Activated CD4-positive, alpha-beta T cell treated with anti-CD3 and anti-CD28 coated beads, Interleukin-2, amount 10 ng/mL, durations not matched to agents 24 days and 14 days (primary cell): ENCODE measurements at regions of chr11 and their contacts with region 1.

Region 1: GRCh38 chr11:73141848-73142286 is 251 bp downstream of the FCHSD2 start:
- DNase-seq: peak; percentile 89
- H3K4me3 Mint-ChIP-seq: peak overlapping the region; percentile 99
- H3K27ac Mint-ChIP-seq: peak overlapping the region; percentile 98
- H3K4me1 Mint-ChIP-seq: peaks cover 42% of the 10 kb centered on the region
- H3K27me3 Mint-ChIP-seq: no peaks in the 10 kb centered on the region

Region 2: GRCh38 chr11:72814286-72815109 is 327.4 kb before region 1 on chr11 and contains the start of gene ATG16L2:
- intact Hi-C with region 1: loop called (anchors 1 kb)
- DNase-seq: peak; percentile 98
- H3K4me3 Mint-ChIP-seq: peak within 1 kb of the TSS; percentile 92
- H3K27ac Mint-ChIP-seq: peak within 1 kb of the TSS; percentile 100
- H3K4me1 Mint-ChIP-seq: peaks cover 44% of the 10 kb centered on the region
- H3K27me3 Mint-ChIP-seq: no peaks in the 10 kb centered on the region
- total RNA-seq, gene ATG16L2: 74.1 and 75.8 TPM in 2 replicates

Region 3: DNA sequence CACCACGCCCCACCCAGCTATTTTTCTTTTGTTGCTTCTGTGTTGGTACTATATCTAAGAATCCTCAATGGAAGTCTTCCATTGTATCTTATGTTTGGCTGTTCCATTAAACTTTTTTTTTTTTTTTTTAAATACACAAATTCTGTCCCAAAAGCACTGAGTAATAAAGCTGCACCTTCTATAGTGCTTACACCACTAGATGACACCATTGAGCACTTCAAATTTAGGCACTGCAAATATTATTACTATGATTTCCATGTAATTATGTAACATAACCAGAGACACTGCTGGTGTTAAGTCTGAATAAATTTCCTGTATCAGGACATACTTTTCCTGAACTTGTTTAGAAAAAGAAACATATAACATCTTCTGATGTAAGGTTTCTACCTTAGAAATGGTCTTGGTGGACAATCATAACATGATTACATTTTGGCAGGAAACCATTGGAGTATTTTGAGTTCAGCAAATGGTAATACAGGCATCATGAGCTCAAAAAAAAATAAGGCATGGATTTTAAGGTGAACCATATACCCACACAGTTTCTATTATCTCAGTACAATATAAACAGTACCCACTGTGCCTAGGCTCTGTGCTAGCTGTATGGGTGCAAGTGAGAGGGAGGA is 217.2 kb before region 1 on chr11:
- intact Hi-C with region 1: loop called (anchors 5 kb)
- DNase-seq: no peak
- H3K4me3 Mint-ChIP-seq: no peak overlapping the region
- H3K27ac Mint-ChIP-seq: no peak overlapping the region
- H3K4me1 Mint-ChIP-seq: peaks cover 3% of the 10 kb centered on the region
- H3K27me3 Mint-ChIP-seq: no peaks in the 10 kb centered on the region

Region 4: GRCh38 chr11:72969894-72970335 is 172.0 kb before region 1 on chr11:
- intact Hi-C with region 1: loop called (anchors 2 kb)
- DNase-seq: peak; percentile 68
- H3K4me3 Mint-ChIP-seq: peak overlapping the region; percentile 9
- H3K27ac Mint-ChIP-seq: peak overlapping the region; percentile 27
- H3K4me1 Mint-ChIP-seq: peaks cover 53% of the 10 kb centered on the region
- H3K27me3 Mint-ChIP-seq: no peaks in the 10 kb centered on the region

Region 5: GRCh38 chr11:73034777-73035176 is 107.1 kb before region 1 on chr11:
- intact Hi-C with region 1: loop called (anchors 2 kb)
- DNase-seq: peak; percentile 61
- H3K4me3 Mint-ChIP-seq: peak overlapping the region; percentile 58
- H3K27ac Mint-ChIP-seq: peak overlapping the region; percentile 88
- H3K4me1 Mint-ChIP-seq: peaks cover 17% of the 10 kb centered on the region
- H3K27me3 Mint-ChIP-seq: no peaks in the 10 kb centered on the region

Region 6: GRCh38 chr11:73152861-73153483 is 11.1 kb after region 1 on chr11:
- intact Hi-C with region 1: loop called (anchors 1 kb)
- DNase-seq: peak; percentile 88
- H3K4me3 Mint-ChIP-seq: peak overlapping the region; percentile 13
- H3K27ac Mint-ChIP-seq: peak overlapping the region; percentile 54
- H3K4me1 Mint-ChIP-seq: peaks cover 73% of the 10 kb centered on the region
- H3K27me3 Mint-ChIP-seq: no peaks in the 10 kb centered on the region

Region 7: GRCh38 chr11:73177778-73178577 is 36.1 kb after region 1 on chr11:
- intact Hi-C with region 1: loop called (anchors 2 kb)
- DNase-seq: peak; percentile 93
- H3K4me3 Mint-ChIP-seq: no peak overlapping the region
- H3K27ac Mint-ChIP-seq: no peak overlapping the region
- H3K4me1 Mint-ChIP-seq: peaks cover 13% of the 10 kb centered on the region
- H3K27me3 Mint-ChIP-seq: peaks cover 18% of the 10 kb centered on the region